WTC11 (cell line): ENCODE measurements at regions of chr19 and their contacts with region 1.

Region 1: GRCh38 chr19:50357178-50358100 is 8.0 kb downstream of the NAPSA start:
- DNase-seq: peak; percentile 86
- ATAC-seq: peak; percentile 86
- H3K4me3 Mint-ChIP-seq: no peak overlapping the region; the same call in 1 of the 2 replicates
- H3K27ac Mint-ChIP-seq: no peak overlapping the region
- H3K4me1 Mint-ChIP-seq: peaks cover 2% of the 10 kb centered on the region; the same call in 1 of the 2 replicates
- H3K27me3 Mint-ChIP-seq: peaks cover 21% of the 10 kb centered on the region
- CTCF ChIP-seq: peak; percentile 78

Region 2: GRCh38 chr19:50383852-50384684 is 26.6 kb after region 1 on chr19 and contains the start of gene POLD1:
- CTCF ChIA-PET with region 1: interaction called, 15 read pairs
- POLR2A ChIA-PET with region 1: no interaction called
- DNase-seq: peak; percentile 99
- ATAC-seq: peak; percentile 90
- H3K4me3 Mint-ChIP-seq: peak within 1 kb of the TSS; percentile 92
- H3K27ac Mint-ChIP-seq: peak within 1 kb of the TSS; percentile 91
- H3K4me1 Mint-ChIP-seq: peaks cover 21% of the 10 kb centered on the region
- H3K27me3 Mint-ChIP-seq: no peaks in the 10 kb centered on the region
- CTCF ChIP-seq: no peak
- total RNA-seq, gene POLD1: 163 to 179 TPM (median 178 TPM) in 3 replicates

Region 3: DNA sequence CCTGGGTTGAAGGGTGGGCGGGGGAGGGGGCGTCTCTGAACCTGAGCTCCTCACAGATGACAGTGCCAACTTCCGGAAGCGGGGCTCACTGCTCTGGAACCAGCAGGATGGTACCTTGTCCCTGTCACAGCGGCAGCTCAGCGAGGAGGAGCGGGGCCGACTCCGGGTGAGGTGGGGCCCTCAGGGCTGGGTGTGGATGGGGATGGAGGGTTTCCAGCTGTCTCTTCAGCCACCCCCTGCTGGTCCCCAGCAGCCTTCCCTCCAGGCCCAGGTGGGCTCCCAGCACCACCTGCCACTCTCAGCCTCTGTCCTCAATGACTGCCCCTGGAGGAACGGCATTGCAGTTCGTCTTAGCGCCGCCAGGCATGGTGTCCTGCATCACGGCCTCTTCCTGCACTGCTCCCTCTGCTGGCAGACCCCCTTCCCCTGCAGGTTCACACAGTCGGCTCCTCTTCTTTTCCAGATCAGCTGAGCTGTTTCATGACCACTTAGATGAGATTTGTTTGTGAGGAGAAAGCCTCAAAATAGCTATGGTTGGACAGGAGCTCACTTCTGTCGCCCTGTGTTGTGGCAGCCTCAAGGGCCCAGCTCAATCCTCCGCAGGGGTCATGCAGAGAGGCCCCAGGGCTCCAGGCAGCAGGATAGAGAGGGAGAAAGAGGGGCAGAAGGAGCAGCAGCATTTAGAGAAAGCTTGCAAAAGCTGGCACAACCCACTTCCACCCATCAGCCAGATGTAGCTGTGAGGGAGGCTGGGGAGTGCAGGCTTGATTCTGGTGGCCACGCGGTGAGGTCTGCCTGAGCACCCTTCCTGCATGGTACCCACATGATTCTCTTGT is 121.7 kb after region 1 on chr19:
- CTCF ChIA-PET with region 1: interaction called, 14 read pairs
- POLR2A ChIA-PET with region 1: no interaction called
- DNase-seq: peak; percentile 77
- ATAC-seq: peak; percentile 18
- H3K4me3 Mint-ChIP-seq: no peak overlapping the region
- H3K27ac Mint-ChIP-seq: no peak overlapping the region
- H3K4me1 Mint-ChIP-seq: peaks cover 9% of the 10 kb centered on the region
- H3K27me3 Mint-ChIP-seq: no peaks in the 10 kb centered on the region; the same call in 1 of the 2 replicates
- CTCF ChIP-seq: peak; percentile 37; the same call in 1 of the 2 replicates

Region 4: DNA sequence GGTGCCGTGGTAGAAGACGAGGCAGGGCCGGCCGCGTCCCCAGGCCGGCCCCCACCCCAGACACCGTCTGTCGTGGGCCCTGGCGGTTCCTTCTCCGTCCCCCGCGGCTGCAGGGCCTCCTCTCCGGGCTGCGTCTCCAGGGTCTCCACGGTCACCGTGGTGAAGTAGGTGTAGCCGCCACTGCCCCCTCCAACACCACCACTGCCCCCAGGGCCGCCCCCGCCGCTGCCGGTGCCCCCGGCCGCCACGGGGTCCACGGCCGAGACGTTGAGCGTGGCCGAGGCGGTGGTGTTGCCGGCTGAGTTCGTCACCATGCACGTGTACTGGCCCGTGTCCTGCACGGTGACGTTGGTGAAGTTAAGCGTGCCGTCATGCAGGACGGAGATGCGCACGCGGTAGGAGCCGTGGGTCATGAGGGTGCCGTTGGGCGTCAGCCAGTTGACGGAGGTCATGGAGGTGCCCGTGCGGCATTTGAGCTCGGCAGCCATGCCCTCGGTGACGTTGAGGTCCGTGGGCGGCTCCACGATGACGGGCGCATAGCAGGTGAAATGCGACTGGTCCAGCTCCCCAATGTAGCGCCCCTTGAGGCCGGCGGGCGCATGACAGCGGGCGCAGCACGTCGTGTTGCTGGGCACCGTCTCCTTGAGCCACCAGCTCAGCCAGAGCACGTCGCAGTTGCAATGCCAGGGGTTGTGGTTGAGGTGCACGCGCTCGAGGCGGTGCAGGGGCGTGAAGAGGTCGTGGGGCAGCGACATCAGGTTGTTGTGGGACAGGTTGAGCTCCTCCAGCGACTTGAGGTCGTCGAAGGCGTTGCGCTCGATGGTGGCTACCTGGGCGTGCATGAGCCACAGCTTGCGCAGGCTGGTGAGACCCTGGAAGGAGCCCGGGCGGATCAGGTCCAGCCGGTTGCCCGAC is 160.9 kb after region 1 on chr19:
- CTCF ChIA-PET with region 1: no interaction called
- POLR2A ChIA-PET with region 1: no interaction called
- DNase-seq: peak; percentile 73
- ATAC-seq: peak; percentile 72
- H3K4me3 Mint-ChIP-seq: no peak overlapping the region
- H3K27ac Mint-ChIP-seq: no peak overlapping the region
- H3K4me1 Mint-ChIP-seq: 0 out of 2 replicates have a peak, but pooled peaks cover 1% of the 10 kb centered on the region
- H3K27me3 Mint-ChIP-seq: peaks cover 21% of the 10 kb centered on the region
- CTCF ChIP-seq: peak; percentile 59